ENCODE measurements at regions of chr3 and their contacts with region 1.

Region 1: DNA sequence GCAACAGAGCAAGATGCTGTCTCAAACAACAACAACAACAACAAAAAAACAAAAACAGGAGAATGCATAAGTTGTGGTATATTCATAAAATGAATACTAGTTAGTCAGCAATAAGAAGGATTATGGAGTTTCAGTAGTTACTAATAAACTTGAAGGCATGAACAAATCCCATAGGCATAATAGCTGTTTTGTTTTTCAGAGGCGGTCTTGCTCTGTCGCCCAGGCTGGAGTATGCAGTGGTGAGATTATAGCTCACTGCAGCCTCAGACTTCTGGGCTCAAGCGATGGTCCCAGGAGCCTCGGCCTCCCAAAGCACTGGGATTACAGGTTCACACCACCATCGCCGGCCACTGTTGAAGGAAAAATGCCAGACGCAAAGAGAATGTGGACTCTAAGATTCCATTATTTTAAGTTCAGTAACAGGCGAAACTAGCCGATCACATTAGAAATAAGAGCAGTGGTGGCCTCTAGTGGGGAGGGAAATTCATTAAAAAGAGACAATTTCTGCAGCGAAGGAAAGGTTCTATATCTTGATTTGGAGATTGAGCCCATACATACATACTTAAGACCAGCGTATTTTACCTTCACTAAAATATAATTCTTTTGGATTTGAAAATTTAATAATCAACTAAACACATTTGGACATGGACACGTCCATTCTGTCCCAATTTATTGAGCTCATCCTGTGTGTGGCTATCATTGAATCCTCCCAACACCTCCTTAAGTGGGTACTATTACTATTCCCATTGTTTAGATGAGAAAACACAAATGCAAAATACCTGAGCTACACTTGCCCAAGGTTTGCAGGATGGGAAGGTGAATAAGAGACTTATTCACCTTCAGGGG is 27.4 kb upstream of the HDAC11 start:
- DNase-seq: no peak
- H3K4me3 ChIP-seq: peak overlapping the region in 1 of 4 experiments; percentile 57; a peak in 2 of 8 replicates
- H3K27ac ChIP-seq: no peak overlapping the region
- H3K4me1 ChIP-seq: peaks cover 2 to 5% (median 4%) of the 10 kb centered on the region in 4 experiments; a peak in 5 of 7 replicates
- H3K27me3 ChIP-seq: no peaks in the 10 kb centered on the region
- CTCF ChIP-seq: peak in 2 of 3 experiments; percentile 43 to 48; a peak in 2 of 4 replicates
- EP300 ChIP-seq: no peak
- POLR2A ChIP-seq: no peak
- RAD21 ChIP-seq: peak; percentile 65 to 68

Region 2: GRCh38 chr3:13200946-13201345 is 251.8 kb before region 1 on chr3:
- CTCF ChIA-PET with region 1: interaction called, 14 read pairs
- POLR2A ChIA-PET with region 1: no interaction called
- DNase-seq: peak in 1 of 2 experiments; percentile 19
- H3K4me3 ChIP-seq: no peak overlapping the region
- H3K27ac ChIP-seq: no peak overlapping the region
- H3K4me1 ChIP-seq: peaks cover 0 to 3% (median under 1%) of the 10 kb centered on the region in 4 experiments; a peak in 5 of 7 replicates
- H3K27me3 ChIP-seq: peaks cover 0 to 4% (median 3%) of the 10 kb centered on the region in 4 experiments; a peak in 4 of 7 replicates
- CTCF ChIP-seq: peak in 2 of 3 experiments; percentile 71 to 72; a peak in 3 of 4 replicates
- EP300 ChIP-seq: no peak
- POLR2A ChIP-seq: no peak
- RAD21 ChIP-seq: peak; percentile 81 to 85

Region 3: GRCh38 chr3:13353936-13354542 is 98.7 kb before region 1 on chr3:
- CTCF ChIA-PET with region 1: interaction called, 53 read pairs
- POLR2A ChIA-PET with region 1: interaction called, 4 read pairs
- DNase-seq: no peak
- H3K4me3 ChIP-seq: no peak overlapping the region
- H3K27ac ChIP-seq: no peak overlapping the region; the same call in 1 of the 2 replicates
- H3K4me1 ChIP-seq: peaks cover 4 to 12% (median 6%) of the 10 kb centered on the region in 4 experiments
- H3K27me3 ChIP-seq: no peaks in the 10 kb centered on the region
- CTCF ChIP-seq: peak; percentile 18 to 48 (median 30); a peak in 3 of 4 replicates
- EP300 ChIP-seq: no peak
- POLR2A ChIP-seq: no peak
- RAD21 ChIP-seq: no peak; a peak in 1 of 4 replicates

Region 4: DNA sequence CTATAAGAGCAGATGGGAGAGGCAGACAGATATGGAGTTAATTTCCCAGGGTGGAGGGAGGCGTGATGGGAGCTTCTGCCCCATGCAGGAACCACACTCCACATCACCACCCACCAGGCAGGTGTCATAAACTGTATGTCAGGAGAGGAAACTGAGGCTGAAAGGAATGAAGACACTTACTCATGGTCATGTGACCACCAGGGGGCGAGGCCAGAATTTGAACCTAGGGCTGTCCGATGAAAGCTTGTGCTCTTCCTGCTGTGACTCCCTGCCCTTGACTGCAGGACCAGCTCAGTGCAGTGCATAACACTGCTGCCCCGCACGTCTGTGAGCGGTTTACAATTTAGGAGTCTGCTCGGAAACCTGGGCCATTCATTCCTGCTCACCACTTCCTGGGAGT is 61.4 kb before region 1 on chr3:
- CTCF ChIA-PET with region 1: interaction called, 57 read pairs
- POLR2A ChIA-PET with region 1: no interaction called
- DNase-seq: no peak
- H3K4me3 ChIP-seq: no peak overlapping the region
- H3K27ac ChIP-seq: no peak overlapping the region
- H3K4me1 ChIP-seq: 0 out of 7 replicates have a peak, but pooled peaks cover 0 to 8% (median 0%) of the 10 kb centered on the region in 4 experiments
- H3K27me3 ChIP-seq: no peaks in the 10 kb centered on the region
- CTCF ChIP-seq: peak in 2 of 3 experiments; percentile 6 to 41; a peak in 3 of 4 replicates
- EP300 ChIP-seq: no peak
- POLR2A ChIP-seq: no peak
- RAD21 ChIP-seq: peak in 1 of 2 experiments; percentile 17; a peak in 1 of 4 replicates

Region 5: DNA sequence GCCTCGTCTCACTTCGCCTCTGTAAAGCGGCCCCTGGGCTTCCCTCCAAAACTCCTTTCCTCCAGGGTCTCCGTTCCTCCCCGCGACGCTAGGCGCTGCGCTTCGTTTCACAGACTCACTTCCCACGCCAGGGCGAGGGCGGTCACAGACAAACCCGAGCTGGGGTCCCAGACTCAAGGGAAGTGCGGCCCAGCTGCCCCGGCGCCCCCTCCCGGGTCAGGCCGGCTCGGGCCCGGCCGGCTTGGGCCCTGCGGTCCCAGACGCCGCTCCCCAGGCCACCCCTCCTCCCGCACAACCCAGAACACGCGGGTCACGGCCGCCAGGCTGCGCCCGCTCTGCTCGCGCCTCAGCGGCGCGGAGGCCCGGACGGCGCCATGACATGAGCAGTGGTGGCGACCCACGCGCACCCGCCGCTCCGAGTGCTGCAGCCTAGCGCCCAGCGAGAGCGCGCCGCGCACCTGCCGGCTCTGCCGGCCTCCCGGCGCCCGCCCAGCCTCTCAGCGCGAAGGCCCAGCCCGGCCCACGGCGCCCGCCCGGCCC is 33.1 kb before region 1 on chr3:
- CTCF ChIA-PET with region 1: interaction called, 49 read pairs
- POLR2A ChIA-PET with region 1: interaction called, 15 read pairs
- DNase-seq: peak in 1 of 2 experiments; percentile 68
- H3K4me3 ChIP-seq: peak overlapping the region; percentile 55 to 85 (median 72)
- H3K27ac ChIP-seq: no peak overlapping the region; the same call in 1 of the 2 replicates
- H3K4me1 ChIP-seq: peaks cover 7 to 18% (median 12%) of the 10 kb centered on the region in 4 experiments
- H3K27me3 ChIP-seq: peaks cover 0 to 8% (median 0%) of the 10 kb centered on the region in 4 experiments; a peak in 4 of 7 replicates
- CTCF ChIP-seq: peak in 1 of 3 experiments; percentile 3; a peak in 1 of 4 replicates
- EP300 ChIP-seq: no peak
- POLR2A ChIP-seq: no peak
- RAD21 ChIP-seq: no peak

Region 6: DNA sequence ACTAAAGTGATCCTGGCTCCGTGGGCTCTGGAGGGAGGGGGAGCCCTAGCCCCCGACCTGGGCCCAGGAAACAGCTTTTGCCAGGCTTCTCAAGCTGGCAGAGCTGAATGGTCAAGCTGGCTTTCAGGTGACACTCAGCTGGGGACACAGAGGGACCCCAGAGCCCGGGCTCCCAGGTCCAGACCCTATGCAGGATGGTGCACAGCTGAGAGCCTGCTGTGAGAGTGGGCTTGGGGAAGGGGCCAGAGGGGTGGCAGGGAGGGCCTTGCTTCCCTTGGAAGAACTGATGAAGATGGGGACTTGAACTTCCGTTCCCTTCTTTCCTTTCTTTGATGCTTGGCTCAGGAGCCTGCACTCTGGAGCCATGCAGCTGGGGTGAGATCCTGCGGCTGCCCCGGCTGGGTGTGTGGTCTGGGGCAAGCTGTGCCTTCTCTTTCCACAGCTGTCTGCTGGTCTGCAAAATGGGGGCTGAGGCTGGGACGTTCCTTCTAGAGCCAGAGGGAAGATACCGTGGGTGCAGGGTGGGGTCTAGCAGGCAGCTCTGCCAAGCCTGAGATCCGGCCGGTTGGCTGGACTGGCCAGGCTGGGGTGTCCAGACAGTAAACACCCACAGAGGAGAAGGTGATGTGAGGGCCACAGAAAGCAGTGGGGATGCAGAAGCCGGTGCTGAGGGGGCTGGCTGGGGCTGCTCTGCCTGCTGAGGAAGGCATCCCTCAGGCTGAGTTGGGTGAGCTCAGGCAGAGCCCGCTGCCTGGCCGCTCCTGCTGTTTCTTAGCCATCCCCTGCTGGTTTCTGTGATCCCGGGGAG is 142.1 kb after region 1 on chr3:
- CTCF ChIA-PET with region 1: no interaction called
- POLR2A ChIA-PET with region 1: no interaction called
- DNase-seq: no peak
- H3K4me3 ChIP-seq: no peak overlapping the region
- H3K27ac ChIP-seq: no peak overlapping the region
- H3K4me1 ChIP-seq: peaks cover 0 to 8% (median 4%) of the 10 kb centered on the region in 4 experiments; a peak in 3 of 7 replicates
- H3K27me3 ChIP-seq: no peaks in the 10 kb centered on the region; a peak in 1 of 7 replicates
- CTCF ChIP-seq: no peak
- EP300 ChIP-seq: no peak
- POLR2A ChIP-seq: no peak
- RAD21 ChIP-seq: no peak